Ovary (tissue), 10 donors: ENCODE measurements at regions of chrX and their contacts with region 1.

Region 1: DNA sequence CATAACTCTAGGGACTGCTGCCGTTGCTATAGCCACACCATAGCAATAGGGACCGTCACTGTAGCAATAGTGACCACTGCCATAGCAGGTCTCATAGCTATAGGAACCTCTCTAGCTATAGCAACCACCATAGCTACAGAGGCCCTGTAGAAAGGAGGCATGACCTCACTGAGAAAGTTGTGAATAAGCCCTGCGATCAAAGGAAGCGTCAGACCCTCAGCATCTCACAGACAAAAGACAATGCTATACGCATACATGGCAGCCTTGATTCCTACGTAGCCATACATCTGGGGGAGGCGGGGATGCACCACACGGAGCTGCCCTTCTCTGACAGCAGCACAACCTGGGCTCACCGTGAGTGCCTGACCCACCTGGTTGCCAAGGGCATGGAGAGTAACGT is 88.5 kb downstream of the MTMR1 start:
- DNase-seq: no peak
- H3K4me3 ChIP-seq: no peak overlapping the region
- H3K27ac ChIP-seq: no peak overlapping the region
- H3K4me1 ChIP-seq: no peaks in the 10 kb centered on the region
- H3K27me3 ChIP-seq: no peaks in the 10 kb centered on the region
- CTCF ChIP-seq: no peak
- EP300 ChIP-seq: no peak
- POLR2A ChIP-seq: no peak

Region 2: DNA sequence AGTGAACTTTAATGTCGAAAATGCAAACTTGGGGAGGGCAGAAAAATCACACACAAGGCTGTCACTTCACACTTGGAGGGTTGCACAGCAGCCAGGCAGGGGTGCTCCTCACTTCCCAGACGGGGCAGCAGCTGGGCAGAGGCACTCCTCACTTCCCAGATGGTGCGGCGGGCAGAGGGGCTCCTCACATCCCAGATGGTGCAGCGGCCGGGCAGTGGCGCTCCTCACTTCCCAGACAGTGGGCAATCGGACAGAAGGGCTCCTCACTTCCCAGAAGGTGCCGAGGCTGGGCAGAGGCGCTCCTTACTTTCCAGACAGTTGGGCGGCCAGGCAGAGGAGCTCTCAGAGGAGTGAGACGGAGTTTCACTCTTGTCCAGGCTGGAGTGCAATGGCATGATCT is 292.1 kb after region 1 on chrX:
- intact Hi-C with region 1: loop called in 1 of 4 experiments (anchors 10 kb)
- DNase-seq: no peak
- H3K4me3 ChIP-seq: no peak overlapping the region
- H3K27ac ChIP-seq: no peak overlapping the region
- H3K4me1 ChIP-seq: no peaks in the 10 kb centered on the region
- H3K27me3 ChIP-seq: no peaks in the 10 kb centered on the region
- CTCF ChIP-seq: no peak
- EP300 ChIP-seq: no peak
- POLR2A ChIP-seq: no peak